Left ventricle myocardium superior (tissue), 1 donor: ENCODE measurements at regions of chr15 and their contacts with region 1.

Region 1: DNA sequence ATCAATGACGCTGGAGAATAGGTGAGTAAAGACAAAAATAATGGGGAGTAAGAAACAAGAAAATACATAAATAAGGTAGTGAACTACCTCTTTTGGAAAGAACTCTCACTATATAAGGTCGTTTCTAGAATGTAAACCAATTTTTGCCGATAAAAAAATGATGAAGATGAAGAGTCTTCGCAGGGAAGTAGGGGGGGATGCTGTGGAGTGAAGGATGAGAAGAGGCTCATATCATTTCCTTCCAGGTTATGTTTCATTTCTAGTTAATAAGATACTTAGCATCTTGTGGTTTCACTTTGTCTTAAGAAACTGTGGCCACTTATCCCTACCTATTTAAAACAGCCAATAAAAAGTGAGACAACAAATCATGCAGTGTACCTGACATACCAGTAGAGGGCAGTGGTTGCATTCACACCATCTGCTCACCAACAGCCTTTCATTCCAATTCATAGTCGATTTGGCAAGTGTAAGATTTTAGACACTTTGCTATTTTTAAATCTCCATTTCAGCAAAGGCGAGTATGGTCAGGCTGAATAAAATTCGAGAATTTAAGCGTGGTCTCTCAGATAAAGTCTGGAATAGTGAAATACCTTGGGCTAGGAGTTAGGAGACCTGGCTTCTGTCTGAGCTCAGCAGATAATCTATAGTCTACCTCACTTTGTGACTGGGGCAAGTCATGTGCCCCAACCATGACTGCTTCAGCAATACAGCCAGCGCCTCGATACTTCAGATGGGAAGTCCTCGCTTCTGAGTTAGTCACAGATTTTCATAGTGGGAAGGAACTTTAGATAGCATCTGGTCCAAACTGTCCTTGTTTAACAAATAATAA is 28.9 kb upstream of the ICE2 start:
- DNase-seq: no peak
- ATAC-seq: peak; percentile 80

Region 2: DNA sequence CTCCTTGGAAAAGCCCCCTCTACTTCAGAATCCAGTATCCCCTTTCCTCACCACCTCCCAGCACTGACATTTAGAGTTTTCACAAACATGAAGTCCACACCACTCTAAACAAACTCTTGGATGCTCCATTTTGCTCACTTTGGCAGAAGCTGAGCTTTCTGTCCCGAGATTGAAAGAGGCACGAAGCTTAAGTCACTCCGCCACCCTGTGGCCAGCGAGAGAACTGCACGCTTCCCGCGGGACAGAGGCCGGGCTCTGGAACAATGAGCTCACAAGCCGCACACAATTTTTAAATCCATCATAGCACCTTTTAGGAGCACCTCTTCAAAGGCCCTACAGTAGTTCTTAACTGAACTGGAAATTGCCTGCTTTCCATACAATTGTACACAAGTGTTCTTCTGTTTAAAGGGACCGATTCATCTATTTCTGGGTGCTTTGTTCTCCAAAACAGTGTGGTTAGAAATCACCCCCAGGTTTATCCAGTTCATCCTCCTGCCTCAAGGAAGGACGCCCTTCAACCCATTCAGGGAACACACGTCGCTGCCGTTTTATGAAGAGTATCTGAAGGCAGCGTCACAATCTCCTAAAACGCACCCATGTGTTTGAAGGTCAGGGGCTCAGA is 1326.4 kb after region 1 on chr15:
- intact Hi-C with region 1: loop called (anchors 5 kb)
- DNase-seq: peak; percentile 89
- ATAC-seq: peak; percentile 82